Left ventricle myocardium inferior (tissue), 1 donor: ENCODE measurements at regions of chr1 and their contacts with region 1.

Region 1: DNA sequence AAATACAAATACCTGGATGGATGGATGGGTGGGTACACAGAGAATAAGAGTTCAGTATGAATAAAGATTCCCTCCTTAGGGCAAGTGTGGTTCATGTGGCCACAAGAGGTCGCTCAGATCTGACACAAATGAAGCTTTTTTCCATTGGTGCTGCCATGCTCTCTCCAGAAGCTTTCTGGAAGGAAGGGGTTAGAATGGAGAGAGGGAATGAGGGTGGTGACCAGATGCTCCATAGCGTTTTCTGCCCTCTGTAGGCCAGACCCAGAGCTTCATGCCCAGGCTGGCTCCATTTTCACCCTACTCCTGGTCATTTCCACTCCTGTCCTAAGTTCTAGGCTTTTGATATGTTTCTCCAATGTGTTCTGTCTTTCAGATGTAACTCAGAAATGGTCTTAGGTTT is 3.3 kb upstream of the FCRL6 start:
- DNase-seq: peak; percentile 35
- H3K4me3 ChIP-seq: no peak overlapping the region
- H3K27ac ChIP-seq: no peak overlapping the region
- H3K4me1 ChIP-seq: peaks cover 4% of the 10 kb centered on the region
- H3K27me3 ChIP-seq: peaks cover 40% of the 10 kb centered on the region
- CTCF ChIP-seq: peak; percentile 84

Region 2: DNA sequence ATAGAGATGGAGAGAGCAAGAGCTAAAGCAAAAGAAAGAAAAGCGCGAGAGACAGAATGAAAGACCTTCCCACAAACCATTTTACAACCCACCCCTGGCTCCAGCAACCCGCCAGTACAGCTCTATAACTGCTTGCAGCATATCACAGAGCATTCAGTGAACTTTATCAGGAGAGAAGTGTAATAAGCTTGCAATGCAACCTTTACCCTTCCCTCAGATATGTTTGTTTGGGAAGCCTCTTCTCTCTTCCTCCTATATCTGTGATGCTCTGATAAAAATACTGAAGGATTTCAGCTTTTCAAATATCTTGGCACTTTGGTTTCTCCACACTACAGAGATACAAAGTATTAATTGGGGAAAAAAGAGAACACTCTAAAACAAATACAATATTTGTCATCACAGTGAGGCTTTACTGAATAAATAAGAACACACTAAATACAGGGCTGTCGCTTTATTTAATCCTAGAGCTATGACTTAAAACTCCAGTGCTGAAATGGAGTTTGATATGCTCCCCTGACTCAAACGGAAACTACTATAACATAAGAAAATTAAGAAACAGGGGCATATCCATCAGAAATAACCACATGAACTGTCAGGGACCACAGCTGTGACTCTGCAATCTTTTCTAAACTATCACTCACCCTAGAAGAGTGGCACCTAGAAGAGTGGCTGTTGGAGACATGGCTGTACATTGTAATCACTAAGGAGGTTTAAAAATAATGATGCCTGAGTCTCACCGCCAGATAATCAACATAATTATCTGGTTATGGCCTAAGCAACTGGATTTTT is 91.2 kb before region 1 on chr1:
- intact Hi-C with region 1: no loop called
- DNase-seq: no peak
- H3K4me3 ChIP-seq: no peak overlapping the region
- H3K27ac ChIP-seq: no peak overlapping the region
- H3K4me1 ChIP-seq: no peaks in the 10 kb centered on the region
- H3K27me3 ChIP-seq: no peaks in the 10 kb centered on the region
- CTCF ChIP-seq: no peak

Region 3: GRCh38 chr1:159891275-159892157 is 92.6 kb after region 1 on chr1:
- intact Hi-C with region 1: loop called (anchors 2 kb)
- DNase-seq: peak; percentile 78
- H3K4me3 ChIP-seq: no peak overlapping the region
- H3K27ac ChIP-seq: no peak overlapping the region
- H3K4me1 ChIP-seq: peaks cover 40% of the 10 kb centered on the region
- H3K27me3 ChIP-seq: no peaks in the 10 kb centered on the region
- CTCF ChIP-seq: peak; percentile 94

Region 4: DNA sequence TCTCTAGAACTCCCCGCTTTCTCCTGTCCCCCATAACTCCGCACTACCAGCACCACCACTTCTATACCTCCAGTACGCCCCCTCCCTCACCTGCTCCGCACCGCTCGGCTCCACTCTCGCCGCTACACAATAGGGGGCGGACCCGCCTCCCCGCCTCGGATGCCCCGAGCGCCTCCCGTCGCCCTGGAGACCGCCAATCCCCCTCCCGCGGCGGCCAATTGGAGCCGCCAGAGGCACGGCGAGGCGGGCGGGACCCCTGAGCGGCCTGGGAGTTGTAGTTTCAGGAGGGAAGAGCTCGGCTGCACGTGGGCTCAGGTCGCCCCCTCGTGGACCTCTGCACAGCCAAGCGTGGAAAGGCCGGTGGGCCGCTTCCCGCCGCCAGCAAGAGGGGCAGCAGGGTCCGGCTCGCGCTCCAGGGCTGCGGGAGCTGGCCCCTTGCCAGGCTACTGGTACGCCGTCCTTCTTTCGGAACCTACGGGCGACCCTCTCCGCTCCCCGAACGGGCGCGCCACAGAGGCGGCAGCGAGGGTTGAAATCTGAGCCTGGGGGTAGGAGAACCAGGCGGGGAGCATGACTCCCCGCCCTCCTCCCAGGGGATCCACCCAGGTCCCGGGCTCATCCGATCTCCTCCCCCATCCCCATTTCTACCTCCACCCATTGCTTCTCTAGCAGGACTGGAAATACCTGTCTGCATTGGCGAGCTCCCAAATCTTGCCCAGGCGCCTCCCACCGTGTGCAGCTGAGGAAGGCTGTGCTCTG is 146.8 kb after region 1 on chr1 and contains the start of gene IGSF9:
- intact Hi-C with region 1: loop called (anchors 10 kb)
- DNase-seq: peak; percentile 85
- H3K4me3 ChIP-seq: peak within 1 kb of the TSS; percentile 69
- H3K27ac ChIP-seq: no peak within 1 kb of the TSS
- H3K4me1 ChIP-seq: peaks cover 18% of the 10 kb centered on the region
- H3K27me3 ChIP-seq: peaks cover 31% of the 10 kb centered on the region
- CTCF ChIP-seq: peak; percentile 77
- total RNA-seq, gene IGSF9: 0.25 TPM

Region 5: GRCh38 chr1:160006312-160006940 is 207.5 kb after region 1 on chr1:
- intact Hi-C with region 1: loop called (anchors 5 kb)
- DNase-seq: peak; percentile 65
- H3K4me3 ChIP-seq: no peak overlapping the region
- H3K27ac ChIP-seq: no peak overlapping the region
- H3K4me1 ChIP-seq: no peaks in the 10 kb centered on the region
- H3K27me3 ChIP-seq: no peaks in the 10 kb centered on the region
- CTCF ChIP-seq: peak; percentile 87

Region 6: DNA sequence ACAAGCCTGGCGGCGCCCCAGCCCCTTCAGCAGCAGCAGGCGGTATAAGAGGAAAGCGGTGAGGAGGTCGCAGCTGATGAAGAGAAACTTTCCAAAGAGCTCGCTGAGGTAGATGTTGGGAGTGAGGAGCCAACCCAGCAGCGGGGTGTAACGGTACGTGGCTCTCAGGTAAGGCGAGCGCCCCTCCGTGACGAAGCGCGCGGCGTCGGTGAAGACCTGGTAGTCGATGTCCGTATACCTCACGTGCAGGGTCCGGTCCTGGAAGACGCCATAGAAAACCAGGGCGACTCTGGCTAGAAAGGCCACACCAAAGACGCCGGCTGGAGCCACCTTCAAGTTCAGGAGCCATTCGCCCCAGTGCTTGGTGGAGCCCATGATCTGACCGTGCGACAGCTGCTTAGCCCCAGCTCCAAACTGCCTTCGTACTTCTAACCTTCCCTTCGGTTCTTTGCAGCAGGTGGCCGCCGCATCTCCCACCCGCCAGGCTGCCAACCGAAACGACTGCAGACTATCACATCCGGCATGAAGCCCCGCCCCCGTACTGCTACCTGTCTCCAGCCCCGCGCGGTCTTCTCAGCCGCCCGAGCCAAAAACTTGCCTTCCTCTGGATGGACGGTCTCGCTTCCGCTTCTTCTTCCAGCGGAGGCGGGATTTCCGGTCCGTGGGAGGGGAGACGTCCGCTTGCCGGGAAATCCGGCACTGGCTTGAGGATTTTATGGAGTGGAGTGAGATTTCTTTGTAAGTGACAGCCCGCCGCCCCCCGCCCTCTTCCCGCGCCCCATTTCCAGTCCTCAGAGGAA is 232.7 kb after region 1 on chr1 and contains the start of gene PIGM:
- intact Hi-C with region 1: no loop called
- DNase-seq: peak; percentile 94
- H3K4me3 ChIP-seq: peak within 1 kb of the TSS; percentile 92
- H3K27ac ChIP-seq: peak within 1 kb of the TSS; percentile 81
- H3K4me1 ChIP-seq: peaks cover 44% of the 10 kb centered on the region
- H3K27me3 ChIP-seq: no peaks in the 10 kb centered on the region
- CTCF ChIP-seq: no peak
- total RNA-seq, gene PIGM: 2.5 TPM

Region 7: DNA sequence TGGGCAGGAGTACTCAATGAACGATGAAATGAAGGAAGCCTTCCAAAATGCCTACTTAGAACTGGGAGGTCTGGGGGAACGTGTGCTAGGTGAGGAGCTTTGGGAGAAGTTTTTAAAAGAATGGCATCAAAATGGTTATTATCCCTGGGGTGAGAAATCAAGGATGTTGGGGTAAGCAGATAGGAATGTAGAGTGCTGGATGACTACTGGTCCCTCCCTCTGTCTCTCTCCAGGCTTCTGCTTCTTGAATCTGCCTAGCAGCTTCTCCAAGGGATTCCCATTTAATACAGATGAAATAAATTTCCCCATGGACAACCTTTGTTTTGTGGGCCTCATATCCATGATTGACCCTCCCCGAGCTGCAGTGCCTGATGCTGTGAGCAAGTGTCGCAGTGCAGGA is 372.5 kb after region 1 on chr1:
- intact Hi-C with region 1: no loop called
- DNase-seq: no peak
- H3K4me3 ChIP-seq: no peak overlapping the region
- H3K27ac ChIP-seq: no peak overlapping the region
- H3K4me1 ChIP-seq: peaks cover 4% of the 10 kb centered on the region
- H3K27me3 ChIP-seq: peaks cover 14% of the 10 kb centered on the region
- CTCF ChIP-seq: no peak